B cell (primary cell): ENCODE measurements at regions of chr17 and their contacts with region 1.

Region 1: DNA sequence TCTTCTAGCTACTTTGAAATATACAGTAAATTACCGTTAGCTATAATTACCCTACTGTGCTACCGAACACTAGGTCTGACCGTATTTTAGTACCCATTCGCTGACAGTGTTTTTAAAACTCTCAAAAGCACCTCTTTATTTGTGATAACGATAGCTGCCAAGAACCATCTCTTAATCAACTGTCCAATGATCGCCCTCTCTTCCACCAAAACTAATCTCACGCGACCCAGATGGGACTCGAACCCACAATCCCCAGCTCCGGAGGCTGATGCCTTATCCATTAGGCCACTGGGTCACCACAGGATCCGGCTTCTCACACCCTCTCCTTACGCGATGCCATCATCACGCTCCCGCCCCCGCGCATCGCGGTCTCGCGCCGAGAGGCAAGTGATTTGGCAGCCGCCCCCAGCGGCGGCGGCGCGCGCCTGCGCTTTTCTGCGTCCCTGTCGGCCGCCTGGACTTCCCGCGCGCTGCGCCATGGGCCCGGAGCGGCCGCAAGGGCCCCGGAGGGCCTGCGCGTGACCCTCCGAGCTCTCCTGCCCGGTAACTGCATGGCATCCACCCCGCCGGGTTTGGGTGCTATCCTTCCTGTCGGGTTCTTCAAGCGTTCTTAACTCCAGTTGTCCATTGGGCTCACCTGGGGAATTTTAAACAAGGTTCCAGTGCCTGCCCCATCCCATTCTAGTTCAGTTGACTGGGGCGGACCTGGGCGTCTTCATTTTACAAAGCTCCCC is 15.7 kb upstream of the KPNA2 start:
- DNase-seq: peak; percentile 97
- ATAC-seq: peak; percentile 89
- H3K4me3 ChIP-seq: peak overlapping the region; percentile 55 to 92 (median 77)
- H3K4me3 Mint-ChIP-seq: peak overlapping the region; percentile 90
- H3K27ac ChIP-seq: peak overlapping the region; percentile 44 to 61
- H3K27ac Mint-ChIP-seq: peak overlapping the region; percentile 100
- H3K4me1 ChIP-seq: peaks cover 7 to 14% of the 10 kb centered on the region in 2 donors
- H3K4me1 Mint-ChIP-seq: peaks cover 18% of the 10 kb centered on the region
- H3K27me3 ChIP-seq: no peaks in the 10 kb centered on the region
- H3K27me3 Mint-ChIP-seq: no peaks in the 10 kb centered on the region
- CTCF ChIP-seq: peak; percentile 71

Region 2: DNA sequence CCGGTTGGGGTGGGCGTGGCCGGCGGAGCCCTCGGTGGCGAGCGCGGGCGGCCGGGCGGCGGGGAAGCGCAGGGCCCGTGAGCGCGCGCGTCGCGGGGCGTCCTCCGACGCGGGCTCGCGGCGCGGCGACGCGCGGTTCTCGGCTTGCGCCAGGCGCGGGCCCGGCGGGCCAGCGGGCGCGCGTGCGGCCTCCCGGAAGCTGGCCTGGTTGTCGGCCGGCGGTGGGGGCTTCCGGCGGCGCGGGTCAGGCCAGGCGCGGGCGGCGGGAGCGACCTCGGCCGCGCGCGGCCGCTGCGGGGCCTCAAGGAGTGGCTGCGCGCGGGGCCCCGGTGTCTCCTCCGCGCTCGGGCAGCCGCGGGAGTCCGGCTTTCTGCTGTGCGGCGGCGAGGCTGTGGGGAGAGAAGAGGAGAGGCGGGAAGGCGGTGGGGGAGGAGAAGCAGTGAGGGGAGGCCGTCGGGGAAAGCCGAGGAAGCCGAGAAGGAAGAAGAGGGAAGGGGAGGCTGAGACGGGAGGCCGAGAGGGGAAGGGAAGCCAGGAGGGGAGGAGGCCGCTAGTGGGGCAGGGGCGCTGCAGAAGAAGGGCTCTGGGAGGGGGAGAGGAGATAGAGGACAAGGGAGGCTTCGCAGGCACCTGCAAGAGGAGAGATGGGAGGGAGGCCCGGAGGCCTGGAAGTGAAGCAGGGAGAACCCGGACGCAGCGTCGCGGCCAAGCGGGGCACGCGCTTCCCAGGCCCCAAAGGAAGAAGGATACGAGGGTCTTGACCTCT is 26.1 kb before region 1 on chr17:
- CTCF ChIA-PET with region 1: interaction called, 5 read pairs
- POLR2A ChIA-PET with region 1: interaction called, 8 read pairs
- intact Hi-C with region 1: loop called (anchors 1 kb)
- DNase-seq: no peak
- ATAC-seq: peak; percentile 81
- H3K4me3 ChIP-seq: peak overlapping the region in 4 of 5 experiments; percentile 68 to 71 (median 70)
- H3K4me3 Mint-ChIP-seq: peak overlapping the region; percentile 85
- H3K27ac ChIP-seq: peak overlapping the region; percentile 50 to 72
- H3K27ac Mint-ChIP-seq: peak overlapping the region; percentile 82
- H3K4me1 ChIP-seq: peaks cover 30 to 34% of the 10 kb centered on the region in 2 donors
- H3K4me1 Mint-ChIP-seq: peaks cover 33% of the 10 kb centered on the region
- H3K27me3 ChIP-seq: peaks cover 0 to 21% (median 8%) of the 10 kb centered on the region in 4 experiments
- H3K27me3 Mint-ChIP-seq: peaks cover 20% of the 10 kb centered on the region
- CTCF ChIP-seq: no peak

Region 3: GRCh38 chr17:68195667-68196393 is 176.0 kb after region 1 on chr17:
- CTCF ChIA-PET with region 1: no interaction called
- POLR2A ChIA-PET with region 1: no interaction called
- intact Hi-C with region 1: no loop called
- DNase-seq: peak; percentile 48
- ATAC-seq: no peak
- H3K4me3 ChIP-seq: peak overlapping the region in 3 of 5 experiments; percentile 35 to 60 (median 53)
- H3K4me3 Mint-ChIP-seq: peak overlapping the region; percentile 80
- H3K27ac ChIP-seq: no peak overlapping the region
- H3K27ac Mint-ChIP-seq: peak overlapping the region; percentile 50
- H3K4me1 ChIP-seq: peaks cover 44 to 49% of the 10 kb centered on the region in 2 donors
- H3K4me1 Mint-ChIP-seq: peaks cover 39% of the 10 kb centered on the region
- H3K27me3 ChIP-seq: peaks cover 0 to 48% (median 17%) of the 10 kb centered on the region in 4 experiments
- H3K27me3 Mint-ChIP-seq: peaks cover 7% of the 10 kb centered on the region
- CTCF ChIP-seq: no peak